ENCODE measurements at regions of chr6 and their contacts with region 1.

Region 1: DNA sequence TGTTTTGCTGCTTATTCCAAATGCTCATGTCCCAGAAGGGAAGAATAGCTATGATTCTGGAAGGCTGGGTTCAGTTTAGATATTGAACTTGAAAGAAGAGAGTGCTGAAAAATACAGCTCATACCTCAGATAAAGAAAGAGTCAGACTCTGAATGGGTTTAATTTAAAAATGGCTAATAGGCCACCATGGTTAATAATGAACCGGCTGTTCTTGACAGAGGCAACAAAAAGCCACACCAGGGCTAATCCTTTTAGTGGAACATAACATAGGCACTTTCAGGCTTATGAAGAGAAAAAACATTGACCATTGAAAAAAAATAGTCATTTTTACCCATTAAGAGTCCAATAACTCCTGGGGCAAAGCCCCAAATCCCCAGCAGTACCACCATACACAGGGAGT is 59.4 kb downstream of the TNFRSF21 start:
- DNase-seq: no peak
- H3K4me3 ChIP-seq: peak overlapping the region; percentile 2
- H3K27ac ChIP-seq: peak overlapping the region; percentile 99
- H3K4me1 ChIP-seq: peaks cover 84% of the 10 kb centered on the region
- CTCF ChIP-seq: no peak

Region 2: GRCh38 chr6:47264775-47265184 is 14.5 kb after region 1 on chr6:
- CTCF ChIA-PET with region 1: interaction called, 3 read pairs
- POLR2A ChIA-PET with region 1: interaction called, 16 read pairs
- intact Hi-C with region 1: no loop called
- DNase-seq: no peak
- H3K4me3 ChIP-seq: no peak overlapping the region
- H3K27ac ChIP-seq: no peak overlapping the region
- H3K4me1 ChIP-seq: peaks cover 40% of the 10 kb centered on the region
- CTCF ChIP-seq: no peak

Measured in OCI-LY7 (cell line).